ENCODE measurements at regions of chr1 and their contacts with region 1.

Region 1: DNA sequence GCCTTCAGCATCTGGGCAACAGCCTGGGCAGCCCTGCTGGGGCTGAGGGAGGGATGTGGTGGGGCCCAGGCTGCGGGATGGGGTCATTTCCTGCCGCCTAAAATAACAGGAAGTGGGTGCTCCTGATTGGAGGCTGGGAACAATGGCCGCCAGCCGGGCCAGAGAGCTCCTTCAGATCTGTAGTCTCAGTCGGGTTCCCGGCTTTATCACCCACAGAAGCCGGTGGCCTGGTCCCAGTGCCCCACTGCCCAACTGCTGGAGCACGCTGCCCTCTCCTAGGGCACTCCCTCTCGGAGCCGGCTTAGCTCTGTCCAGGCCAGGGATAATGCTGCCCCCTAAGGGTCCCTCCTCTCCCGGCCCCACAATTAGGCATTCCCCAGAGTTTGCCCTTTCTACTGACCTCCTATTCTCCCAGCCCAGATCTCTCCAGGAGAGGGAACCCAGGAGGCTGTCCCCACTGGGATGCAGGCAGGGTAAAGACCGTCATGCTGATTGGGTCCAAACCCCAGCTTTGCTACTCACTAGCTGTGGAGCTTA is 5.1 kb downstream of the MAP7D1 start:
- DNase-seq: peak; percentile 27 to 72 (median 66)
- ATAC-seq: peak; percentile 44
- H3K4me3 ChIP-seq: peak overlapping the region; percentile 59
- H3K4me3 Mint-ChIP-seq: peak overlapping the region; percentile 79 to 92 (median 87)
- H3K27ac ChIP-seq: peak overlapping the region; percentile 94
- H3K27ac Mint-ChIP-seq: peak overlapping the region; percentile 92 to 99 (median 97)
- H3K4me1 ChIP-seq: peaks cover 56 to 66% of the 10 kb centered on the region in 2 donors
- H3K4me1 Mint-ChIP-seq: peaks cover 52 to 79% (median 70%) of the 10 kb centered on the region in 7 donors
- H3K27me3 ChIP-seq: no peaks in the 10 kb centered on the region
- H3K27me3 Mint-ChIP-seq: no peaks in the 10 kb centered on the region

Region 2: GRCh38 chr1:36115931-36116330 is 45.1 kb before region 1 on chr1:
- CTCF ChIA-PET with region 1: no interaction called
- POLR2A ChIA-PET with region 1: no interaction called
- intact Hi-C with region 1: no loop called
- DNase-seq: no peak
- ATAC-seq: peak; percentile 52
- H3K4me3 ChIP-seq: no peak overlapping the region
- H3K4me3 Mint-ChIP-seq: no peak overlapping the region
- H3K27ac ChIP-seq: no peak overlapping the region
- H3K27ac Mint-ChIP-seq: no peak overlapping the region
- H3K4me1 ChIP-seq: no peaks in the 10 kb centered on the region
- H3K4me1 Mint-ChIP-seq: peaks cover 5 to 13% (median 8%) of the 10 kb centered on the region in 7 donors
- H3K27me3 ChIP-seq: no peaks in the 10 kb centered on the region
- H3K27me3 Mint-ChIP-seq: peaks cover 0 to 6% (median 4%) of the 10 kb centered on the region in 5 donors

Region 3: DNA sequence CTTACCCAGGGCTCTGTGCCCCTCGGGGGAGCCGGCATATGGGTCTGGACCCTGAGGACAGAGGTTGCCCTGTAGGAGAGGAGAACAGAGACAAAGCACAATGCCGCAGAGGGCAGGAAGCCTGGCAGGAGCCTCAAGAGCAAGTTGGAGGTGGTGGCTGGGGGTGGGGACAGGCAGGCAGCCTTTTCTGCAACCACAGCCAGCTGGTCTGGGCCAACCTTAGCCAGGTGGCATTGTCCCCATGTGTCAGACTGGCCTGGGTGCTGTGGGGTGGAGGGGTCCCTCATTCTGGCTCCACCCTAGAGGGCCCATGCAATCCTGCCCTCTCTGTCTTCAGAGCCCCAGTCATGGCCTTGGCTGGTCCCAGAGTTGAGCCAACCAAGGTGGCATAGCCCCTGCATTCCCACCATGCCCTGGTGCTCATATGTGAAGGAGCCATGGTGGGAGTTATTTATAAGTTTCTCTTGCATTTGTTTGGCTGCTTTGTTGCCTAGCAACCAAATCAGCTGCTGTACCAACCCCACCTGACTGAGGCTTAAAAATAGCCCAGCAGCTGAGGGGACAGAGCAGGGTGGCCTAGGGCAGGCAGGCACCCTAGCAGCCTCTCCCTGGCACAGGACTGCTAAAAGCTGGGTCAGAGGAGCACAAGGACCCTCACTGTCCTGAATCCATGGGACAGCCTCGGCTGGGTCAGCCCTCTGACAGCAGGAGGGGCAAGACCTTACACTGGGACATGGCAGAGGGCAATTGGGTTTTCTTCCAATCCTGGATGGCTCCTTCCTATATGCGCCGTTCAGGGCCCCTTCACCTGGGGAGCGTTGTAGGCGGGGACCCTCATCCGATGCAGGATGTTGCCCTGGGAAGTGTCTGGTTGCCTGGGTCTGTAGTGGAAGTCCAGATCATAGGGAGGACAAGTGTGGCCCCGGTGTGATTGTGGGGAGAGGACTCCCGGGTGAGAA is 14.4 kb after region 1 on chr1:
- CTCF ChIA-PET with region 1: no interaction called
- POLR2A ChIA-PET with region 1: interaction called, 272 read pairs
- intact Hi-C with region 1: no loop called
- DNase-seq: no peak
- ATAC-seq: peak; percentile 41
- H3K4me3 ChIP-seq: no peak overlapping the region
- H3K4me3 Mint-ChIP-seq: no peak overlapping the region
- H3K27ac ChIP-seq: peak overlapping the region; percentile 45
- H3K27ac Mint-ChIP-seq: peak overlapping the region in 6 of 9 donors; percentile 10 to 75 (median 48)
- H3K4me1 ChIP-seq: no peaks in the 10 kb centered on the region
- H3K4me1 Mint-ChIP-seq: peaks cover 2 to 19% (median 12%) of the 10 kb centered on the region in 7 donors
- H3K27me3 ChIP-seq: no peaks in the 10 kb centered on the region
- H3K27me3 Mint-ChIP-seq: no peaks in the 10 kb centered on the region

Region 4: DNA sequence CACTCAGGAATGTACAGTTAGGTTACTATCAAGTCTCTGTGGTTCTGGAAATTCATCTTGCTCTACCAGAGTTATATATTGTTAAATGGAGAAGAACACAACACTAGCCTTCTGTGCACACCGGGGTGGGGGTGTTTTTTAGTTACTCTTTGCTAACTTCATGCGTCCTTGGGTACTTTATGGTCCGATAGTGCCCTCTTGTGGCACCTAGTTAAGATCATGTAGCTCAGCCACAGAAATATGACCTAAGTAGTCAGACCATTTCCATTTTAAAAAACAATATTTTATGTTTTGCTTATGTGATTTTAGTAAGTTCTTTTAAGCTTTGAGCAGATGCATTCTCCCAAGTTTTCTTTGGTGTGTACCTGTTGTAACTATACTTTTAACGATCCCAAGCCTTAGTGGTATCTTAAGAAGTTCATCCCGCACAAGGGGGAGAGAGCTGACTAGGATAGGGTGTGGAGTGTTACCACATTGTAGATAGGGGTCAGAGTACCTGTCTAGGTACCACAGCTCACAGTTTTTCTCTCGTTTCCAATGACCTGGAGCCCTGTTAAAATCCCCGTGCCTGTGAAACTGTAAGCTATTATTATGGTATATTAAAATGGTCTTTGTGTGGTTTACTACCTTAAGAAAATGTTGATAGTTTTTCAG is 124.6 kb after region 1 on chr1:
- CTCF ChIA-PET with region 1: interaction called, 11 read pairs
- POLR2A ChIA-PET with region 1: no interaction called
- intact Hi-C with region 1: loop called in 1 of 2 experiments (anchors 5 kb)
- DNase-seq: peak in 7 of 9 donors; percentile 60 to 80 (median 73)
- ATAC-seq: peak; percentile 96
- H3K4me3 ChIP-seq: no peak overlapping the region
- H3K4me3 Mint-ChIP-seq: no peak overlapping the region
- H3K27ac ChIP-seq: no peak overlapping the region
- H3K27ac Mint-ChIP-seq: peak overlapping the region in 8 of 9 donors; percentile 3 to 87 (median 42)
- H3K4me1 ChIP-seq: no peaks in the 10 kb centered on the region
- H3K4me1 Mint-ChIP-seq: peaks cover 4 to 34% (median 17%) of the 10 kb centered on the region in 7 donors
- H3K27me3 ChIP-seq: no peaks in the 10 kb centered on the region
- H3K27me3 Mint-ChIP-seq: no peaks in the 10 kb centered on the region

Region 5: GRCh38 chr1:37567023-37567422 is 1406.0 kb after region 1 on chr1:
- CTCF ChIA-PET with region 1: no interaction called
- POLR2A ChIA-PET with region 1: no interaction called
- intact Hi-C with region 1: no loop called
- DNase-seq: no peak
- ATAC-seq: no peak
- H3K4me3 ChIP-seq: no peak overlapping the region
- H3K4me3 Mint-ChIP-seq: no peak overlapping the region
- H3K27ac ChIP-seq: no peak overlapping the region
- H3K27ac Mint-ChIP-seq: no peak overlapping the region
- H3K4me1 ChIP-seq: no peaks in the 10 kb centered on the region
- H3K4me1 Mint-ChIP-seq: peaks cover 0 to 23% (median 0%) of the 10 kb centered on the region in 7 donors
- H3K27me3 ChIP-seq: no peaks in the 10 kb centered on the region
- H3K27me3 Mint-ChIP-seq: no peaks in the 10 kb centered on the region